CD4-positive, alpha-beta T cell (primary cell): ENCODE measurements at regions of chr2 and their contacts with region 1.

Region 1: GRCh38 chr2:234288974-234289455 is 207.9 kb downstream of the ARL4C start:
- DNase-seq: peak; percentile 62 to 90 (median 72)
- ATAC-seq: peak; percentile 3
- H3K4me3 ChIP-seq: no peak overlapping the region
- H3K4me3 Mint-ChIP-seq: peak overlapping the region; percentile 31
- H3K27ac ChIP-seq: peak overlapping the region; percentile 96 to 99
- H3K27ac Mint-ChIP-seq: peak overlapping the region; percentile 98
- H3K4me1 ChIP-seq: peaks cover 54% of the 10 kb centered on the region
- H3K4me1 Mint-ChIP-seq: peaks cover 57% of the 10 kb centered on the region
- H3K27me3 ChIP-seq: no peaks in the 10 kb centered on the region
- H3K27me3 Mint-ChIP-seq: no peaks in the 10 kb centered on the region
- CTCF ChIP-seq: peak; percentile 88

Region 2: GRCh38 chr2:233928594-233929351 is 360.2 kb before region 1 on chr2:
- CTCF ChIA-PET with region 1: no interaction called
- POLR2A ChIA-PET with region 1: no interaction called
- intact Hi-C with region 1: no loop called
- DNase-seq: peak in 3 of 14 experiments; percentile 14 to 18 (median 16)
- ATAC-seq: no peak
- H3K4me3 ChIP-seq: no peak overlapping the region
- H3K4me3 Mint-ChIP-seq: no peak overlapping the region
- H3K27ac ChIP-seq: no peak overlapping the region
- H3K27ac Mint-ChIP-seq: no peak overlapping the region
- H3K4me1 ChIP-seq: no peaks in the 10 kb centered on the region
- H3K4me1 Mint-ChIP-seq: no peaks in the 10 kb centered on the region
- H3K27me3 ChIP-seq: peaks cover 18 to 41% of the 10 kb centered on the region in 2 experiments
- H3K27me3 Mint-ChIP-seq: peaks cover 73% of the 10 kb centered on the region
- CTCF ChIP-seq: no peak

Region 3: DNA sequence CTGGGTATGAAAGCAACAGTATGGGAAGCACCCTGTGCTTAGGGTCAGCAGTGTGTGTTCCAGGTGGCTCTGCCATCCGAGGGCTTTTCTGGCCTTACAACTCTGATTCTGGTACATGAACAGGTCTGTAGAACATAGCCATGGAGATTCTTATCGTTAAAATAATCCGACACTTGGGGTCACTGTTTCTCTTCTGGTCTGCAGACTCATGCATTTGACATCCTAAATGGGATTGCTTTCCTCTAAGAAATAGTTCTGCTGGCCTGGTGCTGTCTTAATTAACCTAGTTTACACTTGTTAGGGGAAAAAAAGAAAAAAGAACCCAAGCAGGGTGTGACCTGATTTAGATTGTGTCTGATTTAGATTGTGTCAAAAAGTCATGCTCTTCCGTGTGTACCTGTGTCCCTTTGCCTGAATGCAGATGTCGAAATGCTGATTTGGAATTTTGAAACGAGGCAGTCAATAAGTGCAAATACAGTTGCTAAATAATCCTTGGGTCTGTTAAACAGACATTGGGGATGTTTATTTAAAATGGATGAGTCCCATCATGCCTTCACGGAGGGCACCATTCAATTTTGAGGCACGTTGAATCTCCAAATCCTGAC is 312.2 kb before region 1 on chr2:
- CTCF ChIA-PET with region 1: no interaction called
- POLR2A ChIA-PET with region 1: no interaction called
- intact Hi-C with region 1: loop called in 1 of 2 experiments (anchors 5 kb)
- DNase-seq: peak in 4 of 14 experiments; percentile 40 to 80 (median 80)
- ATAC-seq: peak; percentile 68
- H3K4me3 ChIP-seq: no peak overlapping the region
- H3K4me3 Mint-ChIP-seq: no peak overlapping the region
- H3K27ac ChIP-seq: no peak overlapping the region
- H3K27ac Mint-ChIP-seq: no peak overlapping the region
- H3K4me1 ChIP-seq: peaks cover 17% of the 10 kb centered on the region
- H3K4me1 Mint-ChIP-seq: peaks cover 28% of the 10 kb centered on the region
- H3K27me3 ChIP-seq: no peaks in the 10 kb centered on the region
- H3K27me3 Mint-ChIP-seq: no peaks in the 10 kb centered on the region
- CTCF ChIP-seq: peak; percentile 81

Region 4: GRCh38 chr2:234278556-234279255 is 10.3 kb before region 1 on chr2:
- CTCF ChIA-PET with region 1: no interaction called
- POLR2A ChIA-PET with region 1: interaction called, 10 read pairs
- intact Hi-C with region 1: loop called in 1 of 2 experiments (anchors 2 kb)
- DNase-seq: peak in 4 of 14 experiments; percentile 39 to 81 (median 64)
- ATAC-seq: peak; percentile 76
- H3K4me3 ChIP-seq: no peak overlapping the region
- H3K4me3 Mint-ChIP-seq: peak overlapping the region; percentile 1
- H3K27ac ChIP-seq: peak overlapping the region in 1 of 2 donors; percentile 63
- H3K27ac Mint-ChIP-seq: peak overlapping the region; percentile 75
- H3K4me1 ChIP-seq: peaks cover 45% of the 10 kb centered on the region
- H3K4me1 Mint-ChIP-seq: peaks cover 63% of the 10 kb centered on the region
- H3K27me3 ChIP-seq: no peaks in the 10 kb centered on the region
- H3K27me3 Mint-ChIP-seq: no peaks in the 10 kb centered on the region
- CTCF ChIP-seq: no peak

Region 5: DNA sequence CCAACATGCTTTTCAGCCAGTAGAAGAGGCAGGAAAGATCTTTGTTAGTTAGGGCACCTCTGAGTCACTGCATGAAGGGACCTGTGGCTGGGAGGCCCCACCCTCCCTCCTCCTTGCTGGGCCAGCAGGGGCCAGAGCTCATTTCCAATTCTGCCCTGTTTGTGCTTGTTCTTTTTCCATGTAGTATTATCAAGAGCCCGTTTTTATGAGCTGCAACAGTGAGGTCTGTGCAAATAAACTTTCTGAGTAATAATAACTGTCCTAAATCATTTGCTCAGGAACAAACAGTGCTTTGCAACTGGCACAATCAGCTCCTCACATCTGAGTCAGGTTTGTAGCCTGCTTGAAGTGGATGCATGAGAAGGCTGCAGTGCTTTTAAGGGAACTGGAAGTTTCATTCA is 79.8 kb after region 1 on chr2:
- CTCF ChIA-PET with region 1: interaction called, 3 read pairs
- POLR2A ChIA-PET with region 1: interaction called, 25 read pairs
- intact Hi-C with region 1: loop called (anchors 5 kb)
- DNase-seq: peak in 13 of 14 experiments; percentile 23 to 74 (median 50)
- ATAC-seq: peak; percentile 82
- H3K4me3 ChIP-seq: no peak overlapping the region
- H3K4me3 Mint-ChIP-seq: peak overlapping the region; percentile 50
- H3K27ac ChIP-seq: peak overlapping the region; percentile 47 to 57
- H3K27ac Mint-ChIP-seq: peak overlapping the region; percentile 88
- H3K4me1 ChIP-seq: peaks cover 65% of the 10 kb centered on the region
- H3K4me1 Mint-ChIP-seq: peaks cover 78% of the 10 kb centered on the region
- H3K27me3 ChIP-seq: no peaks in the 10 kb centered on the region
- H3K27me3 Mint-ChIP-seq: no peaks in the 10 kb centered on the region
- CTCF ChIP-seq: no peak

Region 6: GRCh38 chr2:234446404-234447076 is 157.5 kb after region 1 on chr2:
- CTCF ChIA-PET with region 1: interaction called, 3 read pairs
- POLR2A ChIA-PET with region 1: interaction called, 222 read pairs
- intact Hi-C with region 1: loop called in 1 of 2 experiments (anchors 2 kb)
- DNase-seq: peak; percentile 61 to 96 (median 74)
- ATAC-seq: peak; percentile 81
- H3K4me3 ChIP-seq: peak overlapping the region; percentile 18
- H3K4me3 Mint-ChIP-seq: peak overlapping the region; percentile 57
- H3K27ac ChIP-seq: peak overlapping the region; percentile 85 to 93
- H3K27ac Mint-ChIP-seq: peak overlapping the region; percentile 92
- H3K4me1 ChIP-seq: peaks cover 74% of the 10 kb centered on the region
- H3K4me1 Mint-ChIP-seq: peaks cover 86% of the 10 kb centered on the region
- H3K27me3 ChIP-seq: no peaks in the 10 kb centered on the region
- H3K27me3 Mint-ChIP-seq: no peaks in the 10 kb centered on the region
- CTCF ChIP-seq: no peak

Region 7: GRCh38 chr2:234483568-234484251 is 194.7 kb after region 1 on chr2:
- CTCF ChIA-PET with region 1: interaction called, 10 read pairs
- POLR2A ChIA-PET with region 1: interaction called, 211 read pairs
- intact Hi-C with region 1: no loop called
- DNase-seq: peak; percentile 62 to 96 (median 78)
- ATAC-seq: peak; percentile 76
- H3K4me3 ChIP-seq: peak overlapping the region; percentile 19
- H3K4me3 Mint-ChIP-seq: peak overlapping the region; percentile 68
- H3K27ac ChIP-seq: peak overlapping the region; percentile 68 to 81
- H3K27ac Mint-ChIP-seq: peak overlapping the region; percentile 98
- H3K4me1 ChIP-seq: peaks cover 74% of the 10 kb centered on the region
- H3K4me1 Mint-ChIP-seq: peaks cover 94% of the 10 kb centered on the region
- H3K27me3 ChIP-seq: no peaks in the 10 kb centered on the region
- H3K27me3 Mint-ChIP-seq: no peaks in the 10 kb centered on the region
- CTCF ChIP-seq: peak; percentile 80

Region 8: GRCh38 chr2:234500394-234501006 is 211.5 kb after region 1 on chr2:
- CTCF ChIA-PET with region 1: interaction called, 19 read pairs
- POLR2A ChIA-PET with region 1: interaction called, 211 read pairs
- intact Hi-C with region 1: loop called in 1 of 2 experiments (anchors 1 kb)
- DNase-seq: peak; percentile 59 to 91 (median 72)
- ATAC-seq: peak; percentile 46
- H3K4me3 ChIP-seq: no peak overlapping the region
- H3K4me3 Mint-ChIP-seq: peak overlapping the region; percentile 79
- H3K27ac ChIP-seq: no peak overlapping the region
- H3K27ac Mint-ChIP-seq: peak overlapping the region; percentile 96
- H3K4me1 ChIP-seq: peaks cover 29% of the 10 kb centered on the region
- H3K4me1 Mint-ChIP-seq: peaks cover 32% of the 10 kb centered on the region
- H3K27me3 ChIP-seq: no peaks in the 10 kb centered on the region
- H3K27me3 Mint-ChIP-seq: no peaks in the 10 kb centered on the region
- CTCF ChIP-seq: peak; percentile 80

Region 9: GRCh38 chr2:235129850-235130249 is 840.8 kb after region 1 on chr2:
- CTCF ChIA-PET with region 1: no interaction called
- POLR2A ChIA-PET with region 1: no interaction called
- intact Hi-C with region 1: no loop called
- DNase-seq: no peak
- ATAC-seq: no peak
- H3K4me3 ChIP-seq: no peak overlapping the region
- H3K4me3 Mint-ChIP-seq: no peak overlapping the region
- H3K27ac ChIP-seq: no peak overlapping the region
- H3K27ac Mint-ChIP-seq: no peak overlapping the region
- H3K4me1 ChIP-seq: no peaks in the 10 kb centered on the region
- H3K4me1 Mint-ChIP-seq: no peaks in the 10 kb centered on the region
- H3K27me3 ChIP-seq: peaks cover 3 to 7% of the 10 kb centered on the region in 2 experiments
- H3K27me3 Mint-ChIP-seq: peaks cover 51% of the 10 kb centered on the region
- CTCF ChIP-seq: no peak